Activated T-helper 2 cell treated with anti-CD3 and anti-CD28 coated beads, Interferon-gamma antibody, Interleukin-2, Interleukin-4, amounts not matched to agents 10 μg/mL and 5 μg/mL and 100 μg/mL, durations not matched to agents 14 hours and 24 hours and 36 hours (primary cell): ENCODE measurements at regions of chr3 and their contacts with region 1.

Region 1: DNA sequence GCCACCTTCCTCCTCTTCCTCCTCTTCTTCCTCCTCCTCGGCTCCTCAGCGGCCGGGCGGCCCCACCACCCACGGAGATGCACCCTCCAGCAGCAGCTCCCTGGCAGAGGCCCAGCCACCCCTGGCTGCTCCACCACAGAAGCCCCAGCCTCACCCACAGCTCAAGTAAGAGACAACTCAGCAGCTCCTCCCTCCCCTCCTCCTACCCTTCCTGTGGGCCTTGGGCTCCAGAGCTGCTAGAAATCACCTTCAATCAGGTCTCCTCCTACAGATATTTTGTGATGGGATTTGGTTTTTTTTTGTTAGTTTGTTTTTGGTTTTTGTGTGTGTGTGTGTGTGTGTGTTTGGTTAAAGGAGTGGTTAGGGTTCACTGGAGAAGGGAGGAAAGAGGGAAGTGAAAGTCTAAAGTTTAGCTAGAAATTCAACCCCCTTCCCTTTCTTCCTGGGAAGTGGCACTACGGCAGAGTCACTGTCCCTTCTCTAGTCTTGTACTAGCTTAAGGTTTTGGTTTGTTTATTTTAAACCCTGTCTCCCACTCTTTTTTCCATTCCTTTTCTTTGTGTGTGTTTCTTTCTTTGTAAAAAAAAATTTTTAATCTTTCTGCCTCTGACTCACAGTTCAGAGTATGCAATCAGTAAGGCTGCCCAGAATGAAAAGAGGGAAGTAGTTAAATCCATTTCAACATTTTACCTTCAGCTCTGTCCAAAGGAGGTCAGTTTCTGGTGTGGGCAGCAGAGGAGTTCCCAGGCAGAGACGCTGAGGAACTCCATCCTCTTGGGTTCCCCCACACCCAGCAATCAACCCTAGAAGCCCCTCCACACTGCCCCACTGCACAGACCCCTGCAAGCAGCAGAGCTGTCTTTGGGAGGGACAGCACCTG is 29.0 kb upstream of the TIMP4 start:
- DNase-seq: peak; percentile 50
- H3K4me3 Mint-ChIP-seq: peak overlapping the region; percentile 32
- H3K27ac Mint-ChIP-seq: peak overlapping the region; percentile 93
- H3K4me1 Mint-ChIP-seq: peaks cover 78% of the 10 kb centered on the region
- H3K27me3 Mint-ChIP-seq: no peaks in the 10 kb centered on the region

Region 2: GRCh38 chr3:12221663-12222062 is 34.0 kb after region 1 on chr3:
- intact Hi-C with region 1: no loop called
- DNase-seq: no peak
- H3K4me3 Mint-ChIP-seq: no peak overlapping the region
- H3K27ac Mint-ChIP-seq: no peak overlapping the region
- H3K4me1 Mint-ChIP-seq: peaks cover 13% of the 10 kb centered on the region
- H3K27me3 Mint-ChIP-seq: peaks cover 12% of the 10 kb centered on the region

Region 3: DNA sequence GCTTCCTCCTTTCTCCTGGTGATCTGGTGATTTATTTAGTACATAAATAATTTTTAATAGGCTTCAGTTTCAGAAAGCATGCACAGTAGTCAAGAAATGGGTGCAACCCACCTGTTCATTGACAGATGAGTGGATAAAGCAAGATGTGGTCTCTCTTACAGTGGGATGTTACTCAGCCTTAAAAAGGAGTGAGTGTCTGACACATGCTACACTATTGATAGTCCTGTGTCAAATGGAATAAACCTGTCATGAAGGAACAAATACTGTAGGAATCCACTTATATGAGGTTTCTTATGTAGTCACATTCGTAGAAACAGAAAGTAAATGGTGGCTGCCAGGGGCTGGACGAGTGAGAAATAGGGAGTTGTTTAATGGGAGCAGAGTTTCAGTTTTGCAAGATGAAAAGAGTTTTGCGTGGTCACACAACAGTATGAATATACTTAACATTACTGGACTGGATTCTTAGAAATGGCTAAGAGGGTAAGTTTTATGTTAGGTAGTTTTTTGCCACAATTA is 45.2 kb after region 1 on chr3:
- intact Hi-C with region 1: loop called (anchors 2 kb)
- DNase-seq: no peak
- H3K4me3 Mint-ChIP-seq: no peak overlapping the region
- H3K27ac Mint-ChIP-seq: no peak overlapping the region
- H3K4me1 Mint-ChIP-seq: peaks cover 21% of the 10 kb centered on the region
- H3K27me3 Mint-ChIP-seq: peaks cover 6% of the 10 kb centered on the region

Region 4: DNA sequence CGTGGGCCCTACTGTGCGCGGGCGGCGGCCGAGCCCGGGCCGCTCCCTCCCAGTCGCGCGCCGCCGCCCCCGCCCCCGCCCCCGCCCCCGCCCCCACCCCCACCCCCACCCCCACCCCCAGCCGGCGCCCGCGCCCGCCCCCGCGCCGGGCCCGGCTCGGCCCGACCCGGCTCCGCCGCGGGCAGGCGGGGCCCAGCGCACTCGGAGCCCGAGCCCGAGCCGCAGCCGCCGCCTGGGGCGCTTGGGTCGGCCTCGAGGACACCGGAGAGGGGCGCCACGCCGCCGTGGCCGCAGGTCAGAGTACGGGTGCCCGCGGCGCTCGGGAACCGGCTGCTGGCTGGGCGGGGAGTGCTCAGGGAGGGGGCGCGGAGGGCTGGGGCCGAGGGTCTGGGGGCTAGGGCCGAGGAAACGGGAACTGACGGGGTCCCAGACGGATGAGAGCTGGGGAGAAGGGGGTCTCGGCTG is 100.1 kb after region 1 on chr3:
- intact Hi-C with region 1: loop called (anchors 2 kb)
- DNase-seq: no peak
- H3K4me3 Mint-ChIP-seq: peak overlapping the region; percentile 76
- H3K27ac Mint-ChIP-seq: peak overlapping the region; percentile 42
- H3K4me1 Mint-ChIP-seq: peaks cover 18% of the 10 kb centered on the region
- H3K27me3 Mint-ChIP-seq: peaks cover 33% of the 10 kb centered on the region

Region 5: DNA sequence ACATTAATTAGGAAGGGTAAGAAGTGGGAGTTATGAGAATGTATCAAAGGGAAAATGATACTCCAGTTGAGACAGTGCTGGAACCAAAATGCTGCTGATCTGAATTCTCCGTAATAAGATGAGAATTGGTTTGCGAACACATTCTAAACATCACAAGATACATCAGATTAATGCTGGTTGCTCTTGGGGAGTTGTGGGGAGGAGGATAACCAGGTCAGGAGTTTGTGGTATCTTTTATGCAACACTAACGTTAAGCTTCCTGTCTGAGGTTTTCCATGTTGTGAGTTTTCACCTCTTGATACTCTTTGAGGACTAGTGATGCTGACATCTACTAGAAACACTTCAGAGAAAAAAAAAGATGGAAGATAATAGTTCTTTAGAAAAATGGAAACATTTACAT is 148.4 kb after region 1 on chr3:
- intact Hi-C with region 1: loop called (anchors 1 kb)
- DNase-seq: peak; percentile 11
- H3K4me3 Mint-ChIP-seq: peak overlapping the region; percentile 20
- H3K27ac Mint-ChIP-seq: peak overlapping the region; percentile 57
- H3K4me1 Mint-ChIP-seq: peaks cover 27% of the 10 kb centered on the region
- H3K27me3 Mint-ChIP-seq: peaks cover 1% of the 10 kb centered on the region

Region 6: DNA sequence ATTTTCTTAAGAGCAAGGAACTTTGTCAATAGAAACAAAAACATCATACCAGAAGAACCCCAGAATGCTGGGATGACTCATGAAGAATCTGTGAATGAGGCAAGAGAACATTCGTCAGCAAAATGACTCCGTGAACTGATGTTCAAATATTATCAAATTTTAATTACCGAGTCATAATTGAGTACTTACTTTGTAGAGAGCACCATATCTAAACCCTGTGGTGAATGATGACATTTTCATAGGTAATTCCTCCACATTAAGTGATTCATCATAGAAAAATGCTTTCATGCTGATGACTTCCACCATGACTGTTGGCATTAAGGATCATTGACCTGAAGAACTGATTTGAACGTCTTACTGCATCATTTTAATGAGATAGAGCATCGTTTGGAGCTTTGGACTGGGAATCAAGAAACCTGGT is 157.5 kb after region 1 on chr3:
- intact Hi-C with region 1: loop called (anchors 1 kb)
- DNase-seq: no peak
- H3K4me3 Mint-ChIP-seq: no peak overlapping the region
- H3K27ac Mint-ChIP-seq: peak overlapping the region; percentile 79
- H3K4me1 Mint-ChIP-seq: peaks cover 18% of the 10 kb centered on the region
- H3K27me3 Mint-ChIP-seq: peaks cover 5% of the 10 kb centered on the region